ENCODE measurements at regions of chr16 and their contacts with region 1.

Region 1: GRCh38 chr16:11133344-11133943 is 122.6 kb downstream of the SOCS1 start:
- DNase-seq: peak; percentile 91
- H3K4me3 ChIP-seq: no peak overlapping the region
- H3K27ac ChIP-seq: peak overlapping the region; percentile 41
- H3K4me1 ChIP-seq: peaks cover 54% of the 10 kb centered on the region
- H3K27me3 ChIP-seq: no peaks in the 10 kb centered on the region
- CTCF ChIP-seq: no peak

Region 2: GRCh38 chr16:10950393-10950792 is 183.1 kb before region 1 on chr16:
- CTCF ChIA-PET with region 1: no interaction called
- dilution Hi-C with region 1: loop called (anchors 5 kb)
- in situ Hi-C with region 1: no loop called
- intact Hi-C with region 1: loop called (anchors 5 kb)
- DNase-seq: peak; percentile 72
- H3K4me3 ChIP-seq: no peak overlapping the region
- H3K27ac ChIP-seq: peak overlapping the region; percentile 8
- H3K4me1 ChIP-seq: peaks cover 52% of the 10 kb centered on the region
- H3K27me3 ChIP-seq: no peaks in the 10 kb centered on the region
- CTCF ChIP-seq: no peak

Region 3: DNA sequence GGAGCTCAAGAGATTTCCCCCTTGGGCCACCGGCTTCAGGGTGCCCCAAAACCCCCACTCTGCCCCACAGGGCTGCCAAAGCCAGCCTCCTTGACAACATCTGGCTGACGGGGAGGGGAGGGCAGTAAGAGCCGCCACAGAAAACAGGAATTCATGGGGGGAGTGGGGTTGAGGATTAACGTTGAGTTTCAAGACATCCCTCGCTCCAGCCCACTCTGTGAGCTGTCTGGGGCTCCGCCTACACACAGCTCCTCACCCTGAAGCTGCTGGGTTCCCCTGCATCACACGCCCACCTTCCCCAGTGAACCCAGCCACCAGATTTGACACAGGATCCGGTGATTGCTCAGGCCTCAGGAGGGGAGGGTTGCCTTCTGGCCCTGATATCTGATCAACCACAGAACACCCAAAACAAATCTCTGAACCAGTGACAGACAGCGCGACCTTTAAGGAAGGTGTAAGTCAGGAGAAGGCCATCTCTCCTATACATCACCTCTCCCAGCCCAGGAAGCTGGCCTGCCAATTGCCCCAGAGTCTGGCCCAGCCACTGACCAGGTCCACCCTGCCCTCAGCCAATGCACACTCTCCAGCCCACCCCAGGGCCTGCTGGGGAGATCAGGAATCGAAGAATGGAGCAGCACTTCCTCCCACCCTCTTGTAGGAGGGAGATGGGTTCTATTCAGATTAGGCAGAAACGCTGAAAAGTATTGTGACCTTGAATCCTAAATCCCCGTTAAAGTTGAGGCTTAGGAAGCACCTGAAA is 57.0 kb before region 1 on chr16:
- CTCF ChIA-PET with region 1: no interaction called
- dilution Hi-C with region 1: no loop called
- in situ Hi-C with region 1: no loop called
- intact Hi-C with region 1: loop called (anchors 5 kb)
- DNase-seq: no peak
- H3K4me3 ChIP-seq: no peak overlapping the region
- H3K27ac ChIP-seq: no peak overlapping the region
- H3K4me1 ChIP-seq: peaks cover 8% of the 10 kb centered on the region
- H3K27me3 ChIP-seq: no peaks in the 10 kb centered on the region
- CTCF ChIP-seq: no peak

Region 4: DNA sequence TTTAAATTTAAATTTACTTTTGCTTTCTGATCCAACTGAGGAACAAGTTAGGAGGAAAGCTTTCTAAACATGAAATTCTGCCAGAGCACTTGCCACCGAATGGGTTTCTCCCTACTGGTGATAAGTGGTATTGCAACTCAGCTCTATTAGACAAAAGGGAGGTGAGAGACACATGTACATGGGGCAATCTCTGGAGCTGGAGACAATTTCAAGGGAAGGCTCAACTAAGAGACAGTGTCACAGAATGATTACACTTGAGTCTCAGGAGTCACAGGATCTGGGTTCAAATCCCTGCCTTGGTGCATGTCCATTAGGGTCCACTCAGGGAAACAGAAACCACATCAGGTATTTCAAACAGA is 85.1 kb after region 1 on chr16:
- CTCF ChIA-PET with region 1: interaction called, 15 read pairs
- dilution Hi-C with region 1: no loop called
- in situ Hi-C with region 1: no loop called
- intact Hi-C with region 1: no loop called
- DNase-seq: no peak
- H3K4me3 ChIP-seq: no peak overlapping the region
- H3K27ac ChIP-seq: no peak overlapping the region
- H3K4me1 ChIP-seq: no peaks in the 10 kb centered on the region
- H3K27me3 ChIP-seq: no peaks in the 10 kb centered on the region
- CTCF ChIP-seq: peak; percentile 54 to 67

Region 5: GRCh38 chr16:11356573-11357331 is 223.3 kb after region 1 on chr16:
- CTCF ChIA-PET with region 1: no interaction called
- dilution Hi-C with region 1: loop called (anchors 5 kb)
- in situ Hi-C with region 1: no loop called
- intact Hi-C with region 1: loop called (anchors 5 kb)
- DNase-seq: no peak
- H3K4me3 ChIP-seq: no peak overlapping the region
- H3K27ac ChIP-seq: peak overlapping the region; percentile 47
- H3K4me1 ChIP-seq: peaks cover 27% of the 10 kb centered on the region
- H3K27me3 ChIP-seq: no peaks in the 10 kb centered on the region
- CTCF ChIP-seq: peak; percentile 27 to 55